Posterior cingulate gyrus (tissue), 11 donors: ENCODE measurements at regions of chr1 and their contacts with region 1.

Region 1: GRCh38 chr1:200409761-200410565 is at the start of gene ZNF281:
- DNase-seq: peak; percentile 87 to 99 (median 91)

Region 2: GRCh38 chr1:200279810-200280411 is 130.1 kb before region 1 on chr1:
- intact Hi-C with region 1: no loop called
- DNase-seq: peak in 3 of 10 donors; percentile 14 to 59 (median 53)

Region 3: DNA sequence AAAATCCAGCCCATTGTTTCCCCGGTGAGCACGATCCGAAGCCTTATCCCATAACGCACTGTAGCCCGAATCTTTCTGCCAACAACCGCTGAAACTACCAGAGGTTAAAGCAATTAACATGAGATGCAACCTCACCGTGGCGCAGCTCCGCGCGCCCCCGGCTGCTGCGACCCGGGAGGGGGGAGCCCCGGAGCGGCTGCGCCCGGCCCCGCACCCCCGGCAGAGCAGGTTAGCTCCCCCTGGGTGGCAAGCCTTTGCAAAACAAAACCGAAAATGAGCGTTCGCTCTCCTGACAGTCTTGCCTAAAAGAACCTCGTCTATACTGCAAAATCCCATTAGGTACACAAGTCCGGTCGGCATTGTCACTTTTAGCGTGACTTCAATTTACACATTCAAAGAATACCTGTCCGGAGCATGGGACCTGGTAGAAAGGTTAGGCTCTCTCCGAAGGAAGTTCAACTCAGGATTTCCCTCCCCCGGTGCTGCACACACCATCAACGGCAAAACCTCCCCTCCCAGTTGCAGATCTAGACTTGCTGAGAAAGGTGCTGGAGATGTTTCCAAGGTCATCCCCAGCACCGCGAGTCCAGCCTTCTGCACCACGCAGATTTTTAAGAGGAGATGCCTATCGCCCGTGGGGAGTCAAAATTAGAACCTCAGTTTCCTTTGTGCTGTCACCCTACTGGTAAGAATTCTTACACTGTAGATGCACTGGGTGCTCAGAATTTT is 107.6 kb before region 1 on chr1:
- intact Hi-C with region 1: loop called (anchors 5 kb)
- DNase-seq: peak in 7 of 10 donors; percentile 14 to 91 (median 34)

Region 4: DNA sequence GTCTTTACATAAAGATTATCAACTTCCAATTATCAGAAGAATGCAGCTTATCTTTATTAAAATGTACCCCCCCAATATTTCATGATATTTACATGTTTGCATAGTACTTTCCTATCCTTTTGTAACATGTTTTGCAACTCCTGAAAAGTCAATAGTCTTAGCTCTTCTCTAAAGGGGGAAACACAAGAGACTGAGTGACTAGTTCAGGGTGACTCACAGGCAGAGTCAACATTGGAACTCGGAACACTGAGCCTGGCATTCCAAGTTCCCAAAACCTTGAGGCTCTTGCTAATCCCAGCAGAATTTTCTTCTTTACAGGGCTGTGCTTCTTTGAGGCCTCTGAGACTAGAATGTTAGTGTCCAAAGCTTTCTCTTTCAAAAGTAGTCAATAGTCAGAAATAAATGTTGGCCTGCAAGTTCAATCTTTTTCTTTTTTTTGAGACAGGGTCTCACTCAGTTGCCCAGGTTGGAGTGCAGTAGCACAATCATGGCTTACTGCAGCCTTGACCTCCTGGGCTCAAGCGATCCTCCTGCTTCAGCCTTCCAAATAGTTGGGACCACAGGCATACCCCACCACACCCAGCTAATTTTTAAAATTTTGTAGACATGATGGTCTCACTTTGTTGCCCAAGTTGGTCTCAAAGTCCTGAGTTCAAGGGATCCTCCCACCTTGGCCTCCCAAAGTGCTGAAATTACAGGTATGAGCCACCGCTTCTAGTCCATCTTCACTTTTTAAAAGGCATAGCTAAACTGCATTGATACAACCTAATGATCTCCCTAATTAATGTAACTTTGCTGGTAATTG is 37.7 kb before region 1 on chr1:
- intact Hi-C with region 1: no loop called
- DNase-seq: no peak